Activated naive CD4-positive, alpha-beta T cell treated with anti-CD3 and anti-CD28 coated beads, Interleukin-2, amount 10 ng/mL, durations not matched to agents 7 days and 5 days (primary cell): ENCODE measurements at regions of chr1 and their contacts with region 1.

Region 1: DNA sequence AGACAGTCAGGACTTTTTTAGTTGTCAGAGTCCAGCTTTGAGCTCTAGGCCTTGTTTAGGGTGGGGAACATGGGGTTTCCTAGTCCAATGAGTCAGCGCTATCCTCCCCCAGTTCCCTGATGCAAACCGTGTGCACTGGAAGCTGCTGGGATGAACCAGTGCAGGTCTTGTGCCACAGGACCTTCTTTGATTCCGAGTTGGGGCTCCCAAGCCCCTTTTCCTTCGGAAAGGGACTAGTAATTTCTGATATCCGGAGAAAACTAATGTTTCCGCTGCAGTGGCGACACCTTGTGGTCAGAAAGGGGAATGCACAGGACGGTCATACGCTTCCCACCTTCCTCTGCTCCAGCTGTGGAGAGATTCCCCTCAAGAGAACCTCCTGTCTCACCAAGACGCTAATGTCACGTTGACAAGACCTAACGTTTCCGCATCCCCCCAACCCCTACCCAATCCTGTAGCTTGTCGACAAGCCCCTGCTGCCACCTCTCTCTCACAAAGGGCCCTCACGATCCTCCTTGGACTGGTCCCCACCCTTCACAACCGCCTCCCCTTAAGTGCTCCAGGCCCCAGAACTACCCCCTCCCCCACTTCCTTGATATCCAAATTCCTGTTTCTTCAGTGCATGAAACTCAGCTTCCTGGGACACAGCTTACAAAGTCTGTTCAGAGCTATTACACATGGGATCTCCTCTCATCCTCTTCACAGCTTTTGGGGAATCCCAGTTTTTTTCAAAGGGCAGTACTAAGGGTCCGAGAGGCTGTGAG is 30.9 kb downstream of the GPA33 start:
- DNase-seq: peak; percentile 81
- H3K4me3 Mint-ChIP-seq: no peak overlapping the region
- H3K27ac Mint-ChIP-seq: no peak overlapping the region
- H3K4me1 Mint-ChIP-seq: peaks cover 7% of the 10 kb centered on the region
- H3K27me3 Mint-ChIP-seq: no peaks in the 10 kb centered on the region

Region 2: GRCh38 chr1:166884040-166884642 is 175.1 kb before region 1 on chr1:
- CTCF ChIA-PET with region 1: interaction called, 146 read pairs
- DNase-seq: peak; percentile 59
- H3K4me3 Mint-ChIP-seq: no peak overlapping the region
- H3K27ac Mint-ChIP-seq: no peak overlapping the region
- H3K4me1 Mint-ChIP-seq: peaks cover 20% of the 10 kb centered on the region
- H3K27me3 Mint-ChIP-seq: peaks cover 39% of the 10 kb centered on the region

Region 3: DNA sequence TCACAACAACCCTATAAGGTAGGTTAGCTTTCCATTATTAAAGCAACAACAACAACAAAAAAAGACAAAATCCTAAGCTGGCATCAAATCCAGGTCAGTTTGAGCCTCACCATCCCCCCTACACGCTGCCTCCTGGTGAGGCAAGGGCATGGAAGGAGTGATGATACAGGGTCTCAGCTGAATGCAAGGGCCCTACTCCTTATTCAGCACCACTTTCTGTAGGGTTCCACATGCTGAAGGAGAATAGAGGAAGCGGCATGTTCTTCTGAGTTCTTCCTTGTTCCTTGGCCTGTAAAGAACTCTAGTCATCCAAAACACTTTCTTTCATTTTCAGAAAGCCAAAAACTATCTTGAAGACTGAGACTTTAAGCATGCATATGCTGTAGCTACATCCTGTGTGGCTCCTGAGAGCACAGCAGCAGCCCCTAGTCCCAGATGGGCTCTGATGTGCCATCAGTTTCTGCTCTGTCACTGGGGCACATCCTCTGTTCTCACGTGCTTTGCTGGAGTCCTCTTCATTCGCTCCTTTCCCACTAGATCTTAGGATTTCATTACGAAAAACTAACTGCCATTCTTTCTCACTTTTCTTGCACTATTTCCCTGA is 90.1 kb before region 1 on chr1:
- CTCF ChIA-PET with region 1: interaction called, 13 read pairs
- DNase-seq: peak; percentile 61
- H3K4me3 Mint-ChIP-seq: no peak overlapping the region
- H3K27ac Mint-ChIP-seq: peak overlapping the region; percentile 39
- H3K4me1 Mint-ChIP-seq: peaks cover 43% of the 10 kb centered on the region
- H3K27me3 Mint-ChIP-seq: peaks cover 23% of the 10 kb centered on the region

Region 4: GRCh38 chr1:167043752-167044488 is 15.3 kb before region 1 on chr1:
- CTCF ChIA-PET with region 1: interaction called, 12 read pairs
- DNase-seq: peak; percentile 87
- H3K4me3 Mint-ChIP-seq: peak overlapping the region; percentile 76
- H3K27ac Mint-ChIP-seq: peak overlapping the region; percentile 86
- H3K4me1 Mint-ChIP-seq: peaks cover 20% of the 10 kb centered on the region
- H3K27me3 Mint-ChIP-seq: peaks cover 31% of the 10 kb centered on the region

Region 5: GRCh38 chr1:167121375-167122120 is 62.3 kb after region 1 on chr1:
- CTCF ChIA-PET with region 1: interaction called, 36 read pairs
- DNase-seq: peak; percentile 59
- H3K4me3 Mint-ChIP-seq: peak overlapping the region; percentile 77
- H3K27ac Mint-ChIP-seq: peak overlapping the region; percentile 53
- H3K4me1 Mint-ChIP-seq: peaks cover 12% of the 10 kb centered on the region
- H3K27me3 Mint-ChIP-seq: peaks cover 54% of the 10 kb centered on the region